Activated CD4-positive, alpha-beta T cell treated with anti-CD3 and anti-CD28 coated beads, Interleukin-2, amount 10 ng/mL, durations not matched to agents 24 days and 14 days (primary cell): ENCODE measurements at regions of chr2 and their contacts with region 1.

Region 1: DNA sequence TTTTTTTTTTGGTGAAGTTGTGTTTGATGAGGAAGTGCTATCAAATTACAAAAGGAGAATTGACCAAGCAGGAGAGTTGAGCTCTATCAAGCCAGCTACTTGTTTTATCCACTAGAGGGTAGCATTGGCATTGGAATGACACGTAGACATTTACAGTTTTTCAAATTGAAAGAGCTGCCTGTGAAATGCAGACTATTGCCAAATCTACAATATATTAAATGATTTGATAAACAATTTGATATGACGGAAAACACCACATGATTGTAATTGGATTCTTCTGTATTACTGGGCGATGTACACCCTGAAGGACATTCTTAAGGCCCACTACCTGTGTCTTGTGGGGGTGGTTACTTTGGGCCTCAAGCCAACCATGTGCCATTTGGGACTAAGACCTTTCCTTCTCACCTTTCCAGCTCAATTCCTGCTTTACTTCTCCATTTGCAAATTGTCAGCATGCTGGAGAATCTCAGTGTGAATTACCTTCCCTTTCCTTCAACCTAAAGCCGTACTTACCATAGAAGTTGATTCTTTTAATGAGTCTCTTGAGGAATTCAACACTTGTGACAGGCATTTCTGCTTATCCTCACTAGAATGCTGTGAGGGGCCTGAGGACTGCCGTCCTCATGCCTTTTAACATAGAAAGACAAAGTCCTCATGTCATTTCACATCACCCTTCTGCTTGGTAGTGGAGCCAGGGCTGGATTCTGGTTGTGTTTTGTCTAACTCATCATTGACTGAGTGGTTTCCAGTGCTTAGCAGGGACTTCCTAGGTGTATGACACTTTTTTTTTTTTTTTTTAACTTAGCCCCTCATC is 134.8 kb upstream of the THUMPD2 start:
- DNase-seq: peak; percentile 78
- H3K4me3 Mint-ChIP-seq: no peak overlapping the region
- H3K27ac Mint-ChIP-seq: peak overlapping the region; percentile 43
- H3K4me1 Mint-ChIP-seq: peaks cover 25% of the 10 kb centered on the region
- H3K27me3 Mint-ChIP-seq: peaks cover 11% of the 10 kb centered on the region

Region 2: GRCh38 chr2:40127890-40128557 is 214.2 kb after region 1 on chr2:
- intact Hi-C with region 1: loop called (anchors 10 kb)
- DNase-seq: no peak
- H3K4me3 Mint-ChIP-seq: no peak overlapping the region
- H3K27ac Mint-ChIP-seq: no peak overlapping the region
- H3K4me1 Mint-ChIP-seq: peaks cover 11% of the 10 kb centered on the region
- H3K27me3 Mint-ChIP-seq: no peaks in the 10 kb centered on the region

Region 3: GRCh38 chr2:40554668-40555285 is 640.9 kb after region 1 on chr2:
- intact Hi-C with region 1: loop called (anchors 1 kb)
- DNase-seq: peak; percentile 88
- H3K4me3 Mint-ChIP-seq: no peak overlapping the region
- H3K27ac Mint-ChIP-seq: no peak overlapping the region
- H3K4me1 Mint-ChIP-seq: no peaks in the 10 kb centered on the region
- H3K27me3 Mint-ChIP-seq: peaks cover 4% of the 10 kb centered on the region

Region 4: DNA sequence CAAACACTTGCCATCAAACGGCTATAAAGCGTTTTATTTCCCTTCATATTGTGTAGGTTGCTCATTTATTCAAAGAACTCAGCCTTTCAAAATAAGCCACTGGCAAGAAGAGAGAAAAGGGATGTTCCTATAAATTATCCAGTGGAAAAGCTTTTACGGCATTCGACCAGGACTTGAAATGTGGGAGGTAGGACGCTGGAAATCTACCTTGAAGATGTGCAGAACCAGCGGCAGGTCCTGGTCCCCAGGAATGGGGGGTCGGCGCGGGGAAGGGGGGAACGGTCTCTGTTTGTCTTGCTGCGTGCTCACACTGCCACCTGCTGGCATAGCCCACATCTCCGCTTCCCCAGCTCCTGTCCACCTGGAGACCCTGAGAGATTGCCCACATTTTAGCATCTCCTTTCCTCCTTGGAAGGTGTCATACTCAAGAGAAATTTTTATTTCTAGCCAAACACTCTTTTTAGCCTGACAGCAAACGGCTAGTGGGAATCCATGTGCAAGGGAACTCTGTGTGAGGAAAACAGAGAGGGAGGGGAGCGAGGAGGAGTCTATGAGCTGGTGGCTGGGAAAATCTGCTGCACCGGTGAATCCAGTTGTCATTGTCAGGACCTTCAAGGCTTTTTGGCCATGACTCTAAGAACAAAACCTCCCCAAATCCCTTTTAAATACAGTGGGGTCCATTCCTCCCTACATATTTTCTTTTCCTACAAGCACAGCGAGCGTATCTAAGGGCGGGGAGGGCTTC is 1785.0 kb after region 1 on chr2:
- intact Hi-C with region 1: loop called (anchors 10 kb)
- DNase-seq: no peak
- H3K4me3 Mint-ChIP-seq: no peak overlapping the region
- H3K27ac Mint-ChIP-seq: no peak overlapping the region
- H3K4me1 Mint-ChIP-seq: no peaks in the 10 kb centered on the region
- H3K27me3 Mint-ChIP-seq: peaks cover 2% of the 10 kb centered on the region